Mucosa of descending colon (tissue), 3 donors: ENCODE measurements at regions of chr6 and their contacts with region 1.

Region 1: DNA sequence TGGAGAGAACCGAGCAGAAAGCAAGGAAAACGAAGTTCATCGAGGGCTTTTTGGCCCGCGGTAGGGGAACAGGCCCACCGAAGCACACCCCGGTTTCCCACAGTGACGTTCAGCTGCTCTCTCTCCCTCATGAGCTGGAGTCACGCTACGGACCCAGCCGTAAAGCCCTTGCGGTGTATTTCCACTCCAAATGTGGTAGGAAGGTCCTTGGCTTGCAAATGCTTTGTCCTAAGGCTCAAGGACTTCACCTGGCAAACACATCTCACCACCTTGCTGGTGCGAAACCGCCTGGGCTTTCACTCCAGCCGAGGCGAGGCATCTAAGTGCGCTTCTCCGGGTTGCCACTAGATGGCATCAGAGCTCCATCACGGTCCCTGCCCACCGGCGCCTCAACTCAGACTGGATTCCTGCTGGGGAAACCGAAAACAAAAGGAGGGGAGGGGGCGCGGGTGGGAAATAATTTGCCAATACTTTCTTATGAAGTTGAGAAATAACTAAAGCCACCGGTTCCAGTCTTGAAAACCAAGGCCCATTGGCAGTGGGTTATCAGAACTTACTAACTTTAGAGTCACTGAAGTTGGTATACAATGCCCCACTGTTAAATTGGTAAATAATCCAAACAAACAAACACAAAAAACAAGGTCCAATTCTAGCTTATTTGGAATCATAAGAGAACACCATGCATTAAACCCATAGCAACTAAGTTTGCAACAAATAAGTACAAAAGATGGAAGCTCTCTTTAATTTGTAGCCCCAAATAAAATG is 13.4 kb upstream of the FOXC1 start:
- DNase-seq: peak in 2 of 3 donors; percentile 58 to 71
- ATAC-seq: peak; percentile 87
- H3K4me3 ChIP-seq: no peak overlapping the region
- H3K4me1 ChIP-seq: peaks cover 5% of the 10 kb centered on the region
- CTCF ChIP-seq: peak; percentile 85

Region 2: DNA sequence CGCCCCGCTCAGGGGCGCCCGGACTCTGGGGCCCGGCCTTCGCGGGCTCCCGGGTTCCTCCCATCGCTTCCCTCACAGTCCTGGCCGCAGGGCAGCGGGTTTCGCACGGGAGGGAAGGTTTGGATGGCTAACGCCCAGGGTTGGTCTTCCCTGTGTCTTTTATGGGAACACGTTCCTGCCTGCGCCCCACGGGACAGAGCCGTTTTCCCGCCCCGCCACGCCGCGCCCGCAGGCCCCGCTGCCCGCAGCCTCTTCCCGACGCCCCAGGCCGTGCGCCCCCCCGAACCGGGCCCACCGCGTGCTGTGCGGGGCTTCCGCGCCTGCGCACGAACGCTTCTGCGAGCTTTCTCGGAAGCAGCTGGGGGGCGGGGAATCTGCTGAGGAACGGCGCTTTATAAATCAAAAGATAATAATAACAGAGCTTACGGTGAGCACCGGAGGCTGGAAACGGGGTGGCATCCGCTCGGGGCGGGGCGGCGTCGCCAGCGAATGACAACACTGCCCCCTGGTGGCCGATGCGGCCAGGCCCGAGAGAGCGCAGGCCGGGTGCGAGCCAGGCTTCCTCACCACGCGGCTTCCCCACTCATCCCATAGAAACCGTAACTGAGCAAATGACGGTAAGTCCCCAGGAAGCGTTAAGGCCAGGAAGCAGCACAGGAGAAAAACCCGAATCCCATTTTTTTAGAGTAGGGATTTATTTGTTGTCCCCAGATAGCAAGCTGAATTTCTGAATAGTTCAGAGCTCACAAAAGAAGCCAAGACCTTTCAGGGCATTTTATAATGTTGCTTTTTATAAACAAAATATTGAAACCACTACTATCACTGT is 1038.1 kb after region 1 on chr6:
- intact Hi-C with region 1: loop called (anchors 10 kb)
- DNase-seq: peak; percentile 85 to 89 (median 89)
- ATAC-seq: peak; percentile 99
- H3K4me3 ChIP-seq: no peak overlapping the region
- H3K4me1 ChIP-seq: peaks cover 6% of the 10 kb centered on the region
- CTCF ChIP-seq: peak; percentile 93

Region 3: DNA sequence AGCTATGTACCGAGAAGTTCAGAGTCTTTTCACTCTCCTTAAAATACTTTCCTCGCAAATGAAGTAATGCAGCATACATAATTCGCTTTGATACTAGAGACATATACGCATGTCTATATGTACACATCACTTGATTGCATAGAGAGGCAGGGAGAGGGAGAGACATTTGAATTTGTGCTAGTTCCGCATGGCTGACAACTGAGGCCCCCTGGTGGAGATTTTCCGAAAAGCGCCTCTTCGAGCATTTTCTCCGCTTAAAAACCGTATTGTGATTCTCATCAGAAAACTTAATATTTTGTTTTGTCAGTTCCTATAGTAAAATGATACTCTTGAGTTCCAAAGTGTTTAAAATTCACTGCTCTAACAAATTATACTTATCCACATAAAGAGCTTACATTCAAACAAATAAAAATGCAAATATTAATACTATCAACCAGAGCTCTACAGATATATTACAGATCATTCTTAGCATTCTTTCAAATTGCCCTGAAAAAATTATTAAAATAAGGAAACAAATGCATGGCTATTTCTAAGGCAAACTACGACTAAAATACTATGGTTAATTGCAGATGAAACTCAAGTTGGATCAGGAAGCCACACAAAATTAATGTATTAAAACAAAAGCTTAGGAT is 1153.8 kb after region 1 on chr6:
- intact Hi-C with region 1: loop called in 1 of 2 experiments (anchors 10 kb)
- DNase-seq: peak in 2 of 3 donors; percentile 59 to 82
- ATAC-seq: peak; percentile 81
- H3K4me3 ChIP-seq: no peak overlapping the region
- H3K4me1 ChIP-seq: no peaks in the 10 kb centered on the region
- CTCF ChIP-seq: peak; percentile 80